ENCODE measurements at regions of chr18 and their contacts with region 1.

Region 1: DNA sequence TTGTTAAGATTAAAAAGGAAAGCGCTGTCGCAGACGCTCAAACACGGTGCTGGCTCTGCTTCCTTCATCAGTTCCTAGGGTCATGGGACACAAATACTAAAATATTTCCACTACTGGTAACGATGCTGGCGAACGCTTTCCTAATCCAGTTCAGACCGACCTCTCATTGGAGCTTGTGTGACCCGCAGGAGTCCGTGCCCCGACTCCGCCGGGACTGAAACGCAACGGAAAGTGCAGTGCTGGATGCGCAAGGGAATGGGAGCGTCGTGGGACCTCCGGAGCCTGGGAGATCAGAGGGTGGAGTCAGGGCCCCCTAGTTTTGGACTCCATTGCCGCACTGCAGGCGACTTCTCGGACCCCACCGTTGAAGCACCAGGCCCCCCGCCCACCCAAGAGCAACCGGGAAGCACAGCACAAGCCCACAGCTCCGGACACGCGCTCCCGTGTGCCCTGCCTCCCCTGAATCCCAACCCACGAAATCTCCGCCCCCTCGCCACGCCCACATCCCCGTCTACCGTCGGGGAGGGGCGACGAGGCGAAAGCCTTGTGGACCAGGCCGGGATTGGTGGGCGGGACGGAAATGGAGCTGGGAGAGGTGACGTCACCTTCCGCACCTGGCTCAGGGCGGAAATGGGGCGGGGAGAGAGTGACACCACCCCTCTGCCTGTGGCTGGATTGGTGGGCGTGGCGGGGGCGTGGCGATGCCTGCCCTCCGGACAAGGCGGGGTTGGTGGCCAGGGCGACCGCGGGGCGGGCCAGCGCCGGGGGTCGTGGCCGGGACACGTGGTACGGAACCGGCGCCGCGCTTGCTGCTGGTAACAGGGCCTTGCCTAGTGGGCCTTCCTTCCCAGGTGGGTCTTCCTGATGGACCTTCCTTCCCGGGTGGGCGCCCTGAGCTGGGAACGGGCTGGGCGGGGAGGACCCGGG is at the start of gene CNDP2:
- DNase-seq: peak; percentile 100
- ATAC-seq: peak; percentile 71
- H3K4me3 Mint-ChIP-seq: peak within 1 kb of the TSS; percentile 81
- H3K27ac Mint-ChIP-seq: peak within 1 kb of the TSS; percentile 100
- H3K4me1 Mint-ChIP-seq: peaks cover 37% of the 10 kb centered on the region
- H3K27me3 Mint-ChIP-seq: no peaks in the 10 kb centered on the region
- total RNA-seq, gene CNDP2: 128 to 146 TPM

Region 2: GRCh38 chr18:74040459-74041332 is 455.1 kb before region 1 on chr18:
- CTCF ChIA-PET with region 1: no interaction called
- POLR2A ChIA-PET with region 1: no interaction called
- intact Hi-C with region 1: loop called in 1 of 2 experiments (anchors 5 kb)
- DNase-seq: peak; percentile 86
- ATAC-seq: peak; percentile 98
- H3K4me3 Mint-ChIP-seq: no peak overlapping the region
- H3K27ac Mint-ChIP-seq: no peak overlapping the region
- H3K4me1 Mint-ChIP-seq: no peaks in the 10 kb centered on the region
- H3K27me3 Mint-ChIP-seq: no peaks in the 10 kb centered on the region

Region 3: GRCh38 chr18:74147779-74148542 is 347.9 kb before region 1 on chr18 and contains the starts of genes FBXO15 and TIMM21:
- CTCF ChIA-PET with region 1: no interaction called
- POLR2A ChIA-PET with region 1: no interaction called
- intact Hi-C with region 1: loop called (anchors 1 kb)
- DNase-seq: peak; percentile 98
- ATAC-seq: peak; percentile 91
- H3K4me3 Mint-ChIP-seq: peak within 1 kb of the TSS; percentile 97
- H3K27ac Mint-ChIP-seq: peak within 1 kb of the TSS; percentile 98
- H3K4me1 Mint-ChIP-seq: peaks cover 36% of the 10 kb centered on the region
- H3K27me3 Mint-ChIP-seq: no peaks in the 10 kb centered on the region
- total RNA-seq, gene FBXO15: 1.4 to 1.6 TPM
- total RNA-seq, gene TIMM21: 36.9 to 52.8 TPM

Region 4: DNA sequence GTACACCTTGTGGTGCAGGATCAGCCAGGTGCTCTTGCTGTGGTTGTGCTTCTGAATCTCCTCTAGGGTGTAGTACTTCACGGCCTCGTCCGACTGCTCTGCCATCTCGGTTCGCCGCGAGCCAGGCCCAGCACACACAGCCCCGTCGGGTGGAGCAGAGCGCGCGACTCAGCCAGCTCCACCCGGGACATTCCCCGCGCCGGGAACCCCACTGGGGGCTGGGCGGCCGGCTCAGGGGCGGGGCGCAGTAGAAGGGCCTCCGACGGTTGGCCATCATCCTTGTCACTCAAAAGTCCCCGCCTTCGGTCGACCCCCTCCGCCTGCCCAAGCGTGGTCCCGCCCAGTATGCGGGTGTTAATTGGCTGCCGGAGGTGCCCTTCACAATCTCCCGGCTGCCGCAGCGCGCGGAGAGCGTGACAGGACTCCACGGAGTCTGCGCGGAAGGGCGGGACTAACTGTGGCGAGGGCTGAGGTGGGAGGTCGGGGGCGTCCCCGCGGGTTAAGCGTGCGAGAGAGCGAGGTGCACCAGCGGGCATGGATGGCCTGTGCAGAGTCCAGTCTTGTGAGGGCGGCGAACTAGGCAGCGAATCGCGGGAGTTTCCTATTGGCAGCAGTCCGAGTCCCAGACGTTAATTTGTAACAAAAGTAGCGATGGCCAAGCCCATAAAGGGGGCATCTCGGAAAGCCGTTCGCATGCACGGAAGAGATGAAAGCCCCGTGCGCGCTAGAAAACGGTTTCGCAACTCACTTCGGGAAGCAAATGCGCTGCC is 203.9 kb before region 1 on chr18 and contains the start of gene CYB5A:
- CTCF ChIA-PET with region 1: no interaction called
- POLR2A ChIA-PET with region 1: no interaction called
- intact Hi-C with region 1: loop called (anchors 1 kb)
- DNase-seq: peak; percentile 98
- ATAC-seq: peak; percentile 99
- H3K4me3 Mint-ChIP-seq: peak within 1 kb of the TSS; percentile 86
- H3K27ac Mint-ChIP-seq: peak within 1 kb of the TSS; percentile 83
- H3K4me1 Mint-ChIP-seq: peaks cover 6% of the 10 kb centered on the region
- H3K27me3 Mint-ChIP-seq: no peaks in the 10 kb centered on the region
- total RNA-seq, gene CYB5A: 53.1 to 61.4 TPM

Region 5: GRCh38 chr18:74353169-74353775 is 142.6 kb before region 1 on chr18:
- CTCF ChIA-PET with region 1: interaction called, 40 read pairs
- POLR2A ChIA-PET with region 1: no interaction called
- intact Hi-C with region 1: loop called (anchors 1 kb)
- DNase-seq: peak; percentile 66
- ATAC-seq: peak; percentile 81
- H3K4me3 Mint-ChIP-seq: no peak overlapping the region
- H3K27ac Mint-ChIP-seq: no peak overlapping the region
- H3K4me1 Mint-ChIP-seq: peaks cover 7% of the 10 kb centered on the region
- H3K27me3 Mint-ChIP-seq: no peaks in the 10 kb centered on the region

Region 6: DNA sequence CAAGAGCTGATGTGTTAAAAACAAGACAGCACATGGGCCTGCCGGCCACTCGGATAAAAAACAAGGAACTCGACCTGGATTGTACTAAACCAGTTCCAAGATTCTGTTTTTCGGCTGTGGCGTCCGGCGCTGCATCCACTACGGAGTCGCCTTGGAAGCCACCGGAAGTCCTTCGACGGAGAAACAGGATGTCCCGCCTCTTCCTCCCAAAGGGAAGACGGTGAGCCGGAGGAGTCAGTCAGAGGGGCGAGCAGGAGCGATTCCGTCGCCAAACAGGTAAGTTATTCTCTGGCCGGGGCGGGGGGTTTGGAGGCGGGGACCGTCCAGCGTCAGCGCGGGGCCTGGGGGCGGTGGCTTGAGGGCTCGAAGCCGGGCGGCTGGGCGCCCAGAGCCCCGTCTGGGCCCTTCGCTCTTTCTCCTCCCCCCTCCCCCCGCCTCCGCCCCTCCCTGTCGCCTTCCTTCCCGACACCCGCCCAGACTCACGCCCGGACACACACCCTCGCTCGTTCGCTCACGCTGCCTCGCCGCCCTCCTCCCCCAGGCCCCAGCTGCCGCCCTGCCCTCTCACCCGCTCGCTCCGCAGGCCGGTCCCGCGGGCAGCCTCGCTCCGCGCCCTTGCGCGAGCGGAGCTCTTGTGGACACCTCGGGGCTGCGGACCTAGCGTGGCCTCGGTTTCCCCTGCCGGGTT is 102.0 kb after region 1 on chr18 and contains the start of gene ZNF407:
- CTCF ChIA-PET with region 1: interaction called, 3 read pairs
- POLR2A ChIA-PET with region 1: interaction called, 3 read pairs
- intact Hi-C with region 1: loop called (anchors 1 kb)
- DNase-seq: peak; percentile 90
- ATAC-seq: peak; percentile 79
- H3K4me3 Mint-ChIP-seq: peak within 1 kb of the TSS; percentile 86
- H3K27ac Mint-ChIP-seq: peak within 1 kb of the TSS; percentile 99
- H3K4me1 Mint-ChIP-seq: peaks cover 40% of the 10 kb centered on the region
- H3K27me3 Mint-ChIP-seq: no peaks in the 10 kb centered on the region
- total RNA-seq, gene ZNF407: 11.4 TPM

Region 7: GRCh38 chr18:75984853-75985252 is 1489.0 kb after region 1 on chr18:
- CTCF ChIA-PET with region 1: no interaction called
- POLR2A ChIA-PET with region 1: no interaction called
- intact Hi-C with region 1: no loop called
- DNase-seq: no peak
- ATAC-seq: no peak
- H3K4me3 Mint-ChIP-seq: no peak overlapping the region
- H3K27ac Mint-ChIP-seq: no peak overlapping the region
- H3K4me1 Mint-ChIP-seq: no peaks in the 10 kb centered on the region
- H3K27me3 Mint-ChIP-seq: peaks cover 3% of the 10 kb centered on the region